Activated CD4-positive, alpha-beta T cell treated with anti-CD3 and anti-CD28 coated beads, Interleukin-2, amount 10 ng/mL, durations not matched to agents 24 days and 14 days (primary cell): ENCODE measurements at regions of chr18 and their contacts with region 1.

Region 1: DNA sequence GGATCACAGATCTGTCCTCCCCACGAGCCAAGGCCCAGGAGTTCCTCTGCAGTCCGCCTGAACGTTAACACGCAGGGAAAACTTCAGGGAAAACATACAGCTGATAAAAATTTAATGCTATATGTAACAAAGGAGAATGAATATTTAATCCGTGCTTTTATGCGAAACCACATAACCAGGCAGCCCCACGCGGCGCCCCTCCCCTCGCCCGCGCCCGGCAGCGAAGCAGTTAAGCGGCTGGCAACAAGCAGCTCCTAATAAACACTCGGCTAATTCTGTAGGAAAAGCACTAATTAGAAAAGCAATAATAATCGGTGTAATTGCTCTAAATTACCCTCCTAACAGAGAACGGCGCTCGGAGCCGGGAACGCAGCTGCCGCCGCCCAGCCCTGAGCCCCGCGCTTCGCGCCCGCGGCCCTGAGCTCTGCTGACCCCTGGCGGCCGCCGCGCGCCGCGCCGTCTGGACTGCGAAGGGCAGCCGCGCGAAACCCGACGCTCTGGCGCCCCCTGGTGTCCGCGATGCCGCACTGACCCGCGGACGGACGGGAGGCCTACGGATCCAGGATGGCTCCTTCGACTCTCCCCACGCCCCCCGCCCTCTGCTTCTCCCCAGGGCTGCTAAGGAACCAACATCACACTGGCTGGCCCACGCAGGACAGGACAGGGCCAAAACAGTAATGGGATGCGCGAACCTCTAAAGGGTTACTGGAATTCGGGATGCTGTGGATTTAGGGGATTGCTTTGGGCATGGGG is 181.4 kb downstream of the SMAD2 start:
- DNase-seq: peak; percentile 96
- H3K4me3 Mint-ChIP-seq: peak overlapping the region; percentile 39
- H3K27ac Mint-ChIP-seq: peak overlapping the region; percentile 34
- H3K4me1 Mint-ChIP-seq: peaks cover 4% of the 10 kb centered on the region
- H3K27me3 Mint-ChIP-seq: peaks cover 15% of the 10 kb centered on the region

Region 2: GRCh38 chr18:47100214-47100831 is 648.7 kb before region 1 on chr18:
- intact Hi-C with region 1: loop called (anchors 2 kb)
- DNase-seq: peak; percentile 89
- H3K4me3 Mint-ChIP-seq: no peak overlapping the region
- H3K27ac Mint-ChIP-seq: no peak overlapping the region
- H3K4me1 Mint-ChIP-seq: no peaks in the 10 kb centered on the region
- H3K27me3 Mint-ChIP-seq: no peaks in the 10 kb centered on the region

Region 3: DNA sequence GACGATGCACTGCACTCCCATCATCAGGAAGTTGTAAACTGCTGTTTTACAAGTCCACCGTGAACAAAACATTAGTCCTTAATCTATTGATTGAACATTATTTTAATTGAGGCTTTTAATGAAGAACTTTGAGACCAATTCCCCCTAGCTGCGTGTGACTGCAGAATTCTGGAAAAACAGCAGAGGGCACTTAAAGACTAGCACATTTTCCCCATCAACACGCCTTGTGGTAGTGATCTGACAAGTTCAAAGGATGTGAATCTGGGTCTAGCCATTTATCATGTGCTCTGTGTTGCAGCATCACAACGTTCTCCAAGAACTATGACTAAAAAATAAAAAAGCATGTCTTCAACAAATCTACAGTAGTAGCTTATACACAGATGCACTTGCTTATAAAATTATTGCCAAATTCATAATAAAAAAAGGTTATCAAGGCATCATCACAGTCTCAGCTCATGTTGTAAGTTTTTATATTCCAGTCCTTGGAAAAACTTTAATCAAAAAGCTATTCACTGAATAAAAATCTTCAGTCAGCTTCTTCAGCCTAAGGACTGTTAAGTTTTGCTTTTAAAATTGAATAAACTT is 533.4 kb before region 1 on chr18:
- intact Hi-C with region 1: loop called (anchors 2 kb)
- DNase-seq: peak; percentile 70
- H3K4me3 Mint-ChIP-seq: no peak overlapping the region
- H3K27ac Mint-ChIP-seq: no peak overlapping the region
- H3K4me1 Mint-ChIP-seq: no peaks in the 10 kb centered on the region
- H3K27me3 Mint-ChIP-seq: peaks cover 53% of the 10 kb centered on the region

Region 4: GRCh38 chr18:47397671-47398319 is 351.2 kb before region 1 on chr18:
- intact Hi-C with region 1: loop called (anchors 5 kb)
- DNase-seq: peak; percentile 56
- H3K4me3 Mint-ChIP-seq: no peak overlapping the region
- H3K27ac Mint-ChIP-seq: no peak overlapping the region
- H3K4me1 Mint-ChIP-seq: no peaks in the 10 kb centered on the region
- H3K27me3 Mint-ChIP-seq: no peaks in the 10 kb centered on the region

Region 5: DNA sequence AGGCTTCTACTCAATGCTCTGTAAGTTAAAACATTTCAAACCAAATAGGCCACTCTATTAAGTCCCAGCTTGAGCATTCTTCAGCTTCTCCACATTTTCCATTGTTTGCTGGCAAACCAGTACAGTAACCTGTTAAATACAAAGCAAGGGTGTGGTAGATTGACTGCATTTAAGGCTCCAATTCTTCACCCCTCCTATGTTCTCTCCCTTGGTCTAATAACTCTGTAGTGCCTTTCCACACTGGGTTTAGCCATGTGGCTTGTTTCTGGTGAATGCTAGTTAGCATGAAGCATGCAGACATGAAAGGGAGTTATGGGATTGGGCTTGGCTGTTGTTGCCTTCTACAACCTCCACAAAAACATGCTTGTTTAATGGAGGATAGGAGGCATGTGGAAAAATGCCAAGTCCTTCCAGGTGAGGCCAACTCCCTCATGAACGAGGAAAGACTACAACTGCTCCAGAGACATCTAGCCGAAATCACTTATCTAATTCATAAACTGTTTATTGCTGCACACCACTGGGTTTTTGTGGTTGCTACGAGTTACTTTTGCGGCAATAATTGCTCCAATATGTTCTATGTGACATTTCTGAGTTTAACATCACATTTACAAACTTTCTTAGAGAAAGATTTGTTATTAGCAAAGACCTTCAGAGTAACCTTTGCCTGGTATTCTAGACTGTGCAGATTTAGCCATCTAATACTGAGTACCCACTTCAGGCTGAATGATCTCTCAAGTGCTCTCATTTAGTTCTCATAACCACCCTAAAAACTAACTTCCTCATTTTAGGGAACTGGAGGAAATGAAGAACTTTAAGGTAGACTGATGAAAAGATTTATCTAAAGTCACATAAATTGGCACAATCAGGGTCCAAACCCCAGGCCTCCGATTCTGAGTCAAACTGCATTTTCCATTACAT is 77.4 kb after region 1 on chr18:
- intact Hi-C with region 1: no loop called
- DNase-seq: no peak
- H3K4me3 Mint-ChIP-seq: no peak overlapping the region
- H3K27ac Mint-ChIP-seq: no peak overlapping the region
- H3K4me1 Mint-ChIP-seq: no peaks in the 10 kb centered on the region
- H3K27me3 Mint-ChIP-seq: no peaks in the 10 kb centered on the region

Region 6: GRCh38 chr18:47930931-47931717 is 182.1 kb after region 1 on chr18:
- intact Hi-C with region 1: no loop called
- DNase-seq: peak; percentile 98
- H3K4me3 Mint-ChIP-seq: peak overlapping the region; percentile 86
- H3K27ac Mint-ChIP-seq: peak overlapping the region; percentile 91
- H3K4me1 Mint-ChIP-seq: peaks cover 38% of the 10 kb centered on the region
- H3K27me3 Mint-ChIP-seq: peaks cover 11% of the 10 kb centered on the region